Activated T-helper 1 cell treated with anti-CD3 and anti-CD28 coated beads, Interleukin-12 subunit alpha, Interleukin-12 subunit beta, Interleukin-2, Interleukin-4 antibody, amounts not matched to agents 30 ng/mL and 10 ng/mL and 1 ng/mL, durations not matched to agents 14 hours and 24 hours and 36 hours (primary cell): ENCODE measurements at regions of chr9 and their contacts with region 1.

Region 1: DNA sequence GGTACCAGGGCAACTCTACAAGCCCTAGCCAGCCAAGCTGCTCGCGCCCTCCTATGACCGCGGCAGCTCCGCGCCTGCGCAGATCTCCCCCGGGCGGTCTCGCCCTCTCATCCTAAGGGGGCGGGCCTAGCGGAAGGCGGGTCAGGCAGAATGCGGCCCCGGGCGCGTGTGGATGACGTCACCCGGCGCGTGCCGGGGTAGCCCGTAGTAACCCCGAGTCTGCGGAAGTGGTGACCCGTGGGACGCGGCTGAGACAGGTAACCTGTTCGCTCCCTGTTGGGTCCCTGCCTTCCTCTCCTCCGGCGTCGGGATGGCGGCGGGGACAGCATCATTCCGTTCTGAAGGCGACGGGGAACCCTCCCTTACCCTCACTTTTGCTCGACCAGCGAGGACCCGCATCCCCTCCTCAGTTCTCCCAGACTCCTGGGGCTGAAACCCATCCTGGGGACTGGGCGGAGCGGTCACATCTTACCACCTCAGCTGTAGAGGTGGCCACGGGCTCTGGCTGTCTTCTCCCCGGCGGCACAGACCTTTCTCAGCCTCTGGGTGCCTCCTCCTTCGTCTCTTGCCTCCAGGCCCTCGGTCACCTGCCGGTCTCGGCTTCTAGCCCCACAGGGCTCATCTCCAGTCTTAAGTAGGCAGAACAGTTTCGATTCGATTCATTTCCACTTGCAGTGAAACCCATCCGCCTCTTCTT is at the start of gene AOPEP:
- DNase-seq: peak; percentile 99
- H3K4me3 Mint-ChIP-seq: peak within 1 kb of the TSS; percentile 94
- H3K27ac Mint-ChIP-seq: peak within 1 kb of the TSS; percentile 99
- H3K4me1 Mint-ChIP-seq: peaks cover 12% of the 10 kb centered on the region
- H3K27me3 Mint-ChIP-seq: peaks cover 2% of the 10 kb centered on the region
- total RNA-seq, gene AOPEP: 20.5 and 22.5 TPM in 2 replicates

Region 2: GRCh38 chr9:94630281-94631232 is 96.1 kb before region 1 on chr9:
- intact Hi-C with region 1: no loop called
- DNase-seq: no peak
- H3K4me3 Mint-ChIP-seq: no peak overlapping the region
- H3K27ac Mint-ChIP-seq: no peak overlapping the region
- H3K4me1 Mint-ChIP-seq: no peaks in the 10 kb centered on the region
- H3K27me3 Mint-ChIP-seq: peaks cover 25% of the 10 kb centered on the region

Region 3: GRCh38 chr9:94672811-94673487 is 53.7 kb before region 1 on chr9:
- intact Hi-C with region 1: loop called (anchors 1 kb)
- DNase-seq: no peak
- H3K4me3 Mint-ChIP-seq: no peak overlapping the region
- H3K27ac Mint-ChIP-seq: no peak overlapping the region
- H3K4me1 Mint-ChIP-seq: peaks cover 11% of the 10 kb centered on the region
- H3K27me3 Mint-ChIP-seq: peaks cover 12% of the 10 kb centered on the region

Region 4: GRCh38 chr9:94860968-94861871 is 134.6 kb after region 1 on chr9:
- intact Hi-C with region 1: loop called (anchors 1 kb)
- DNase-seq: peak; percentile 70
- H3K4me3 Mint-ChIP-seq: peak overlapping the region; percentile 73
- H3K27ac Mint-ChIP-seq: peak overlapping the region; percentile 83
- H3K4me1 Mint-ChIP-seq: peaks cover 48% of the 10 kb centered on the region
- H3K27me3 Mint-ChIP-seq: no peaks in the 10 kb centered on the region

Region 5: GRCh38 chr9:94885854-94886447 is 159.3 kb after region 1 on chr9:
- intact Hi-C with region 1: no loop called
- DNase-seq: no peak
- H3K4me3 Mint-ChIP-seq: no peak overlapping the region
- H3K27ac Mint-ChIP-seq: no peak overlapping the region
- H3K4me1 Mint-ChIP-seq: peaks cover 11% of the 10 kb centered on the region
- H3K27me3 Mint-ChIP-seq: no peaks in the 10 kb centered on the region

Region 6: GRCh38 chr9:95004411-95005277 is 278.0 kb after region 1 on chr9:
- intact Hi-C with region 1: loop called (anchors 2 kb)
- DNase-seq: peak; percentile 32
- H3K4me3 Mint-ChIP-seq: peak overlapping the region; percentile 83
- H3K27ac Mint-ChIP-seq: peak overlapping the region; percentile 80
- H3K4me1 Mint-ChIP-seq: peaks cover 41% of the 10 kb centered on the region
- H3K27me3 Mint-ChIP-seq: peaks cover 45% of the 10 kb centered on the region

Region 7: GRCh38 chr9:95167998-95168397 is 441.4 kb after region 1 on chr9:
- intact Hi-C with region 1: loop called (anchors 1 kb)
- DNase-seq: peak; percentile 47
- H3K4me3 Mint-ChIP-seq: peak overlapping the region; percentile 3
- H3K27ac Mint-ChIP-seq: peak overlapping the region; percentile 61
- H3K4me1 Mint-ChIP-seq: peaks cover 48% of the 10 kb centered on the region
- H3K27me3 Mint-ChIP-seq: no peaks in the 10 kb centered on the region

Region 8: DNA sequence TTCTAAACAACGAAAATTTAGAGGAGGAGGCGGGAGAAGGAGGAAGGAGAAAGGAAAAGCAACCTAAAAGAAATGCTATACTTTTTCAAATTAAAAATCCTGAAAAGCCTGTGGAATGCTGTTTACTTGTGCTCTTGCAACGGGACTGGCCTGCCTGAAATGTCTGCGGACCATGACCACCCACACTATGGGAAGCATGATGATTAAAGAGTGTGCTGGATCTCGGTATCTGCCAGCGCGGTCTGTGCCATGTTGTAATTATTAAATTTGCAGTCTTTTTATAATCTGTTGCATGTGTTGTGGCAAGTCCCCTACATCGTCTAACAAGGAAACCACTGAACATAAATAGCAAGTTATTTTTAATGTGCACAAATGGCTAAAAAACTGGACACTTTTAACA is 479.5 kb after region 1 on chr9:
- intact Hi-C with region 1: no loop called
- DNase-seq: no peak
- H3K4me3 Mint-ChIP-seq: no peak overlapping the region
- H3K27ac Mint-ChIP-seq: no peak overlapping the region
- H3K4me1 Mint-ChIP-seq: peaks cover 20% of the 10 kb centered on the region
- H3K27me3 Mint-ChIP-seq: no peaks in the 10 kb centered on the region

Region 9: DNA sequence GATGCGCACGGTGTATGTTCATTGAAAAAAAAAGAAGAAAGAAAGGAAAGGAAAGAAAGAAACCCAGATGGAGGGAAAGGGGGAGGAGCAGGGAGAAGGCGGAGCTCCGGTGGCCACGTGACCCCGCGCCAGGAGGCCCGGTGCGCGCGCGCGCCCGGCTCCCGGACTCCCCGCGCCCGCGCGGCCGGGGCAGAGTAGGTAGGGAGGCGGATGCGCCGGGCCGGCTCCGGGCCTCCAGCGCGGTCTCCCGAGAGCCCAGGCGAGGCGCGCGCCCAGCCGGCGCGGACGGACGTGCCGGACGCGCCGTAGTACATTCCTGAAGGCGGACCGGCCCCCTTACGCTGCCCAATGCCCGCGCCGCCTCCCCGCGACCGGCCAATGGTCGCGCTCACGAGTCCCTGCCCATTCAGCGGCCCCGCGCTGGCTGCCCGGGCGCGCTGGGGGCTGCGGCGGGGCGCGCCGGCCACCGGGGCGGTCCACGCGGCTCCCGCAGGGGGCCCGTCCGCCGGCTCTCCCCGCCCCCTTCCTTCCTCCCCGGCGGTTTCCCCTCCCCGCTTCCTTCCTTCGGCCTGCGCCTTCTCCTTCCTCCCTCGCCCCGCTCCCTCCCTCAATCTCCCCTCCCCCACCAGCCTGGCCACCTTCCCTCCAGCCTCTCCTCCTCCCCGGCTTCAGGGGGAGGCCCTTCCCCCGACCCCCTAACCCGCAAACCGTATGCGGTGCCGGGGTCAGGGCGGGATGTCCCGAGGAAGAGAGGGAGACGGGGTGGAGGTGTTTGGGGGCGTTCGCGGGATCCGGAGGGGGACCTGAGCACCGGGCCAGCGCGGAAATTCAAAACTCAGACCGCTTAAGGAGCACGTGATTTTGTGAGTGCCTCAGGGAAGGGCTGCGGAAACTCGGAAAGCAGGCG is 784.3 kb after region 1 on chr9:
- intact Hi-C with region 1: loop called (anchors 5 kb)
- DNase-seq: peak; percentile 82
- H3K4me3 Mint-ChIP-seq: peak overlapping the region; percentile 84
- H3K27ac Mint-ChIP-seq: peak overlapping the region; percentile 88
- H3K4me1 Mint-ChIP-seq: peaks cover 41% of the 10 kb centered on the region
- H3K27me3 Mint-ChIP-seq: peaks cover 61% of the 10 kb centered on the region

Region 10: GRCh38 chr9:96654443-96655197 is 1928.0 kb after region 1 on chr9:
- intact Hi-C with region 1: loop called (anchors 10 kb)
- DNase-seq: peak; percentile 50
- H3K4me3 Mint-ChIP-seq: peak overlapping the region; percentile 88
- H3K27ac Mint-ChIP-seq: peak overlapping the region; percentile 72
- H3K4me1 Mint-ChIP-seq: peaks cover 11% of the 10 kb centered on the region
- H3K27me3 Mint-ChIP-seq: peaks cover 6% of the 10 kb centered on the region